H1 (cell line): ENCODE measurements at regions of chr3 and their contacts with region 1.

Region 1: DNA sequence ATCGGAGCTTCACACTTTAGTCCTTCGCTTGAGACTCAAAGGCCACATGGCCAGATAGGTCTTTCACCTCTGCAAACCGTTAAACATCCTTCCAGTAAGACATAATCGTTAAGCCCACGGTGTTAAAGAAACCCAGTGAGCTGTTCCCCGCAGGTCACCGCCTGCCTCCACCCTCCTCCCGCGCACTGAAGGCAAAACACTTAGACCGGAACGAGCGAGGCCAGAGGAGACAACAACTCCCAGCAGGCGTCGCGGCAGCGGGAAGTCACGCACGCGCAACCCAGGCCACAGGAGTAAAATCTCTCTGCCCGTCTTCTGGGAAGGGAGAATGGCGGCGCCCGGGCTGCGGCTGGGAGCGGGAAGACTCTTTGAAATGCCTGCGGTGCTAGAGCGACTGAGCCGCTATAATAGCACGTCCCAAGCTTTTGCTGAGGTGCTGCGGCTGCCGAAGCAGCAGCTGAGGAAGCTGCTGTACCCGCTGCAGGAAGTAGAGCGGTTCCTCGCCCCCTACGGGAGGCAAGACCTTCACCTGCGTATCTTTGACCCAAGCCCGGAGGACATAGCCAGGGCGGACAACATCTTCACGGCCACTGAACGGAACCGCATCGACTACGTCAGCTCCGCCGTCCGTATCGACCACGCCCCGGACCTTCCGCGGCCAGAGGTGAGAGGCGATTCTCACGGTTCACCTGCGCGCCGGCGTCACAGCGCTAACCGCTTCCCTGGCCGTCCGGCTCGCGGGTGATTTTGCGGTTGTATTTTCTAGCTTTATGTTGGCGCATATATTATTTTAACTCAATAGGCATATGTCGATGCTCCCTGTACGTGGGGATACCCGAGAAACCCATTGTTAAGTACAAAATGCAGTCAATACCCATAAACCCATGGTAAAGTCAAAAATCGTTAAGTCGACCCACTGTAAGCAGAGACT is at the start of gene GTPBP8:
- DNase-seq: peak; percentile 72 to 89
- H3K4me3 ChIP-seq: peak within 1 kb of the TSS; percentile 78 to 88 (median 84)
- H3K27ac ChIP-seq: peak within 1 kb of the TSS; percentile 99
- H3K4me1 ChIP-seq: 0 out of 7 replicates have a peak, but pooled peaks cover 0 to 3% (median 0%) of the 10 kb centered on the region in 4 experiments
- H3K27me3 ChIP-seq: no peaks in the 10 kb centered on the region; a peak in 1 of 7 replicates
- CTCF ChIP-seq: no peak
- EP300 ChIP-seq: no peak
- POLR2A ChIP-seq: peak; percentile 98
- RAD21 ChIP-seq: no peak; a peak in 1 of 4 replicates
- total RNA-seq, gene GTPBP8: 25.8 and 28.8 TPM in 2 replicates

Region 2: DNA sequence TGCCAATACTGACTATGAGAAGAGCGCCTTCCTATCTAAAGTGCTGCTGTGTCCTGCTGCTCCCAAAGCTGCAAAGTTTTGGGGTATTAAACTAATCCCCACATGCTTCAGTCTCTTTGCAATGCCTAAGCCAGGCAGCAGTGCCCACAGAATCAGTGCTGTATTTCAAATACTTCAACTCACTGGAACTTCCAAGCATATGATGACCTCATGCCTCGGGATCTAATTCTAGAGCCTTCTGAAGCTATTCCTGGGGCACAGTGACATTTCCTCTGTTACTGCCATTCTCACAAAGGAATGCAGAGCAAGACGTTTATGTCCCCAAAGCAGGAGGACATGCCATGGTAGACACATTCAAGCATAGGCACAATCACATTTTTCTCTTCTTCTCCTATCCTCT is 579.5 kb before region 1 on chr3:
- CTCF ChIA-PET with region 1: no interaction called
- POLR2A ChIA-PET with region 1: no interaction called
- DNase-seq: no peak
- H3K4me3 ChIP-seq: no peak overlapping the region
- H3K27ac ChIP-seq: no peak overlapping the region
- H3K4me1 ChIP-seq: peaks cover 0 to 5% (median 3%) of the 10 kb centered on the region in 4 experiments; a peak in 2 of 7 replicates
- H3K27me3 ChIP-seq: no peaks in the 10 kb centered on the region
- CTCF ChIP-seq: no peak
- EP300 ChIP-seq: no peak
- POLR2A ChIP-seq: no peak
- RAD21 ChIP-seq: no peak

Region 3: GRCh38 chr3:112979240-112979832 is 11.6 kb before region 1 on chr3:
- CTCF ChIA-PET with region 1: interaction called, 18 read pairs
- POLR2A ChIA-PET with region 1: interaction called, 8 read pairs
- DNase-seq: no peak
- H3K4me3 ChIP-seq: no peak overlapping the region
- H3K27ac ChIP-seq: no peak overlapping the region
- H3K4me1 ChIP-seq: no peaks in the 10 kb centered on the region
- H3K27me3 ChIP-seq: no peaks in the 10 kb centered on the region
- CTCF ChIP-seq: peak in 2 of 3 experiments; percentile 21 to 40; a peak in 2 of 4 replicates
- EP300 ChIP-seq: no peak
- POLR2A ChIP-seq: no peak
- RAD21 ChIP-seq: peak in 1 of 2 experiments; percentile 53

Region 4: DNA sequence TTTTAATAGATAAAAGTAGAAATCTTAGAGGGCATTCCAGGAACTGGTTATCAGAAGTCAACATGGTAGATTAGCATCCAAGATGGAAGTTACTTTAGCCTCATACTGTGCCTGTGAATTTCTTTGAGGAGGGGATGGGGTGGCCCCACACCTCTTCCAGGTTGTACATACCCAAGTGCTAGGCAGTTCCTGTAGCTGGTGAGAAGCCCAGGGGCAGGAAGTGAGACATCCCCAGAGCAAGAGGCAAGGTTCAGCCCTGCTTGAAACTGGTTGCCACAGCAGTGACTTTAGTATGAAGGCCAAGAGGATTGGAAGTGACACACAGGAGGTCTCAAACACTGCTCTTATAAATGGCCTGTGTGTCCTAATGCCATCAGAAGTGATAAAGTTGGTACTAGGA is 11.7 kb after region 1 on chr3:
- CTCF ChIA-PET with region 1: interaction called, 3 read pairs
- POLR2A ChIA-PET with region 1: interaction called, 18 read pairs
- DNase-seq: no peak
- H3K4me3 ChIP-seq: no peak overlapping the region
- H3K27ac ChIP-seq: no peak overlapping the region
- H3K4me1 ChIP-seq: peaks cover 0 to 7% (median 0%) of the 10 kb centered on the region in 4 experiments; a peak in 1 of 7 replicates
- H3K27me3 ChIP-seq: no peaks in the 10 kb centered on the region
- CTCF ChIP-seq: no peak
- EP300 ChIP-seq: no peak
- POLR2A ChIP-seq: no peak
- RAD21 ChIP-seq: no peak

Region 5: DNA sequence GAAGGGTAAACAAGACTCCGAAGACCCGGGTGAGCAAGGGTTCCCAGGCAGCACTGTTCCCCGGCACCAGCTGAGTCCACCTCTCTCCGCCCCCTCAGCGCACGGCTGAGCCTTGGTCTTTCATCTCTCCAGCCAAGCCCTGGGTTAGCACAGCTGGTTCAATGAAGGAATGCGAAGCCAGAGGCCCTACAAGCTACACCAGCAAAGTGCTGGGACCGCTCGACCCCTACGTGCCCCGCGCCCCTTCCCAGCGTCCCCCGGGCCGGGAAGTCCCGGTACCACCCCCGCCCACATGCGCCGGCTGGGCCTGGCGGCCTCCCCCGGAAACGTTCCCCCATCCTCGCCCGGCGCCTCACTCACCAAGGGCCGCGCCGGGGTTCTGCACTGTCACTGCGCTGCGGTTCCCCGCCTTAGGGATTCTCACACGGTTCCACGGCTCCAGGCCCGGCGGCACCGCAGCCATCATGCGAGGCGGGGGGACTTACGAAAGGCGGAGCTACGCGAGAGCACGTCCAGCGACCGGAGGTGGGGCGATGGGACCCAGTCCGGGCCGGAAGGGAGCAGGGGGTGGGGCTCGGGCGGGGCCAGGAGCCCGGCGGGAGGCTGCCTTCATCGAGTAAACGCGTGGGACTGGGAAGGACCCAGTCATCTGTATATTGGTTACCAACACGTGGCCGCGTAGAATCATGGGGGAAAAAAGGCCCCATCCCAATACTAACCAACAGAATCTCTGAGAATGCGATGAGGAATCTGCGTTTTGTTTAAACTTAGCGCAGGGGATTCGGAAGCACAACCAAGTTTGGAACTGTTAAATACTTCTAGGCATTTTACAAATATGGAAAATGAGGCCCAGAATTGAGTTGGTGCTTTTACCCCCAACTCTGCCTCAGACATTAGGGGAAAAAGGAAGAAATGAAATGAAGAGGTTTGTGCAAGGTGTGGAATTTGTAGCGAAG is 28.5 kb after region 1 on chr3:
- CTCF ChIA-PET with region 1: no interaction called
- POLR2A ChIA-PET with region 1: interaction called, 25 read pairs
- DNase-seq: peak; percentile 81 to 87
- H3K4me3 ChIP-seq: peak overlapping the region; percentile 84 to 96 (median 88)
- H3K27ac ChIP-seq: peak overlapping the region; percentile 91
- H3K4me1 ChIP-seq: peaks cover 0 to 2% (median 0%) of the 10 kb centered on the region in 4 experiments; a peak in 2 of 7 replicates
- H3K27me3 ChIP-seq: no peaks in the 10 kb centered on the region; a peak in 1 of 7 replicates
- CTCF ChIP-seq: no peak
- EP300 ChIP-seq: no peak
- POLR2A ChIP-seq: peak; percentile 68 to 72
- RAD21 ChIP-seq: peak in 1 of 2 experiments; percentile 1; a peak in 1 of 4 replicates